PC-3 (cell line): ENCODE measurements at regions of chr3 and their contacts with region 1.

Region 1: GRCh38 chr3:57446318-57446841 is 97.8 kb downstream of the DNAH12 start:
- DNase-seq: no peak
- ATAC-seq: no peak
- H3K4me3 ChIP-seq: 0 out of 2 replicates have a peak overlapping the region, but pooled peaks have one; percentile 17
- H3K27ac ChIP-seq: no peak overlapping the region
- H3K4me1 ChIP-seq: peaks cover 26% of the 10 kb centered on the region
- H3K27me3 ChIP-seq: no peaks in the 10 kb centered on the region
- CTCF ChIP-seq: no peak

Region 2: DNA sequence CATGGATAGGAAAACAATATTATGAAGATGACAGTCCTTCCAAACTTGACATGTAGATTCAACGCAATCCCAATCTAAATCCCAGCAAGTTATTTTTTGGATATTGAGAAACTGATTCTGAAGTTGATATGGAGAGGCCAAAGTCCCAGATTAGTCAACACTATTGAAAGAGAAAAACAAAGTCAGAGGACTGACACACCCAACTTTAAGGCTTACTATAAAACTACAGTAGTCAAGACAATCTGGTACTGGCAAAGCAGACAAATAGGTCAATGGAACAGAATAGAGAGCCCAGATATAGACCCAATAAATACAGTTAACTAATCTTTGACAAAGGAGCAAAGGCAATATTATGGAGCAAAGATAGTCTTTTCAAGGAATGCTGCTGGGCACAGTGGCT is 34.7 kb before region 1 on chr3:
- CTCF ChIA-PET with region 1: no interaction called
- POLR2A ChIA-PET with region 1: no interaction called
- intact Hi-C with region 1: no loop called
- DNase-seq: no peak
- ATAC-seq: no peak
- H3K4me3 ChIP-seq: no peak overlapping the region
- H3K27ac ChIP-seq: no peak overlapping the region
- H3K4me1 ChIP-seq: peaks cover 8% of the 10 kb centered on the region
- H3K27me3 ChIP-seq: no peaks in the 10 kb centered on the region
- CTCF ChIP-seq: no peak

Region 3: DNA sequence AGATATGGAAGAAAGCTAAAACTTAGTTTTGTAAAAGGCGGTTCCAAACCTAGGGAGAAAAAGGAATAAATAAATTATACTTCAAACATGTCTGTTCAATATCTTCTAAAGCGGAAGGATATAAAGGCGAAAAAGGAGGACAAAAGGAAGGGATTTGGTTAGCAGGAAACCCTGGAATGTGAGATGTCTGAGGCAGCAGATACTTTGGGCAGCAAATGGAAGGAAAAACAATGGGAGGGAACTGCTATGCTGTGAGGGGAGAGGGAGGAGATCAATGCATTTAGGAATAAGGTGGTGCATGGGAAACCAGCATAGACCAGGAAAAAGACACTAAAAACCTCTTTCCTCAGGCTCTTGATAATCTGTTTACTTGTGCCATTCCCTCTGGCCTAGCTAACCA is 23.0 kb before region 1 on chr3:
- CTCF ChIA-PET with region 1: no interaction called
- POLR2A ChIA-PET with region 1: interaction called, 3 read pairs
- intact Hi-C with region 1: loop called (anchors 1 kb)
- DNase-seq: no peak
- ATAC-seq: no peak
- H3K4me3 ChIP-seq: no peak overlapping the region
- H3K27ac ChIP-seq: no peak overlapping the region
- H3K4me1 ChIP-seq: no peaks in the 10 kb centered on the region
- H3K27me3 ChIP-seq: 0 out of 2 replicates have a peak, but pooled peaks cover 3% of the 10 kb centered on the region
- CTCF ChIP-seq: no peak

Region 4: GRCh38 chr3:57484563-57484962 is 38.2 kb after region 1 on chr3:
- CTCF ChIA-PET with region 1: no interaction called
- POLR2A ChIA-PET with region 1: no interaction called
- intact Hi-C with region 1: loop called (anchors 2 kb)
- DNase-seq: peak; percentile 6
- ATAC-seq: peak; percentile 67
- H3K4me3 ChIP-seq: no peak overlapping the region
- H3K27ac ChIP-seq: no peak overlapping the region
- H3K4me1 ChIP-seq: no peaks in the 10 kb centered on the region
- H3K27me3 ChIP-seq: no peaks in the 10 kb centered on the region
- CTCF ChIP-seq: no peak

Region 5: GRCh38 chr3:57544181-57545125 is 98.1 kb after region 1 on chr3 and contains the start of gene DNAH12:
- CTCF ChIA-PET with region 1: no interaction called
- POLR2A ChIA-PET with region 1: no interaction called
- intact Hi-C with region 1: no loop called
- DNase-seq: peak; percentile 41
- ATAC-seq: peak; percentile 78
- H3K4me3 ChIP-seq: peak within 1 kb of the TSS; percentile 54
- H3K27ac ChIP-seq: no peak within 1 kb of the TSS
- H3K4me1 ChIP-seq: peaks cover 9% of the 10 kb centered on the region
- H3K27me3 ChIP-seq: no peaks in the 10 kb centered on the region
- CTCF ChIP-seq: no peak
- total RNA-seq, gene DNAH12: 0.07 TPM in 1 of 2 replicates, not detected in the other